ENCODE measurements at regions of chr9 and their contacts with region 1.

Region 1: GRCh38 chr9:122340161-122340560 is 30.7 kb upstream of the PTGS1 start:
- DNase-seq: no peak
- H3K4me3 ChIP-seq: no peak overlapping the region
- CTCF ChIP-seq: no peak

Region 2: DNA sequence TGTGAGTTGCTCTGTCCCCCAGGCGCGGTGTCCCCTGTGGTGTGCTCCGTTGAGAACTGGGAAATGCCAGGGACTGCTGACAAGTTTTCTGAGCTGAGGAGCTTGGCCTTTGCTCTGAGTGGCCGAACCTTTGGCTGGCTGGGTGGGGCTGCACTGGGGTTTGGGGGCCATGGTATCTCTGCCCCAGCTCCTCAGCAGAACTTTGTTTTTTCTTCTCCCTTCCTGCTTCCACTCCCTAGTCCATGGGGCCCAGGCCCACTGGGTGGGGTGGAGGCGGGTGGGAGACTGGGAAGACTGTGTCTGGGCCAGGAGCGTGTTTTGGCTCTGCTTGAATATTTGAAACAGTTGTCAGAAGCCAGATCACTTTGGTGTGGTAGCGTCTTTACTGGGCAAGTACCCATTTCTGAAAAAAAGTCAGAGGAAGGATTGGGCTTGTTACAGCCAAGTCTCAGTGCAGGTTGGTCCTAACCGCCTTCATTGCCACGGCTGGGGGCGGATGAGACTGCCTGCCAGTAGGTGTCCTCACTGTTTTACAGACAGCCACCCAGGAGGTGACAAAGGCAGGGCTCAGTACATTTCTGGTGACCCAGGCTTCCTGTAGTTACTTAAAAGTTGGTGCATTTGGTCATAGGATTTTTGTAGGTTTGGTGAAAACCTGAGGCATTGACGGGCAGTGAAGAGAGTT is 596.0 kb before region 1 on chr9:
- in situ Hi-C with region 1: no loop called
- DNase-seq: no peak
- H3K4me3 ChIP-seq: peak overlapping the region; percentile 42
- CTCF ChIP-seq: peak; percentile 41

Region 3: DNA sequence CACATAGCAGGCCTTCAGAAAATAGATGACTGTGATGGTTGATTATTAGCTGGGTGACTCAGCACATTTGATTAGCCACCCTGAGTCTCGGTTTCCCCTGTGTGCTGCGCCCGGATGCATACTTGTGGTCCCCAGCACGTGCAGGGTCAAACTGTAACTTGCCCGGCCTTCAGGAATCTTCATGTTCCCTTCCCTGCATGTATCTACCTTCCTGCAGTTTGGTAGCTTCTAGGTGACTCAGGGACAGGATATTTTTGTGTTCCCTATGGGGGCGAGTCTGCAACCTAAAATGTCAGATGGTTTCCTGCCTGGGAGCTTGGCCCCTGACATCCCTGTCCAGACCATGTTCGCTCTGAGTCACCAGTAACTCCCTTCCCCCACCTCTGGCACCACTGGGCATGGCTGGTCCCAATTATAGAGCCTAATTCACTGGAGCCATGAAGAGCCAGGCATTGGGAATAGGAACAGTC is 43.9 kb after region 1 on chr9:
- in situ Hi-C with region 1: loop called (anchors 5 kb)
- DNase-seq: no peak
- H3K4me3 ChIP-seq: no peak overlapping the region
- CTCF ChIP-seq: no peak